ENCODE measurements at regions of chr17 and their contacts with region 1.

Region 1: DNA sequence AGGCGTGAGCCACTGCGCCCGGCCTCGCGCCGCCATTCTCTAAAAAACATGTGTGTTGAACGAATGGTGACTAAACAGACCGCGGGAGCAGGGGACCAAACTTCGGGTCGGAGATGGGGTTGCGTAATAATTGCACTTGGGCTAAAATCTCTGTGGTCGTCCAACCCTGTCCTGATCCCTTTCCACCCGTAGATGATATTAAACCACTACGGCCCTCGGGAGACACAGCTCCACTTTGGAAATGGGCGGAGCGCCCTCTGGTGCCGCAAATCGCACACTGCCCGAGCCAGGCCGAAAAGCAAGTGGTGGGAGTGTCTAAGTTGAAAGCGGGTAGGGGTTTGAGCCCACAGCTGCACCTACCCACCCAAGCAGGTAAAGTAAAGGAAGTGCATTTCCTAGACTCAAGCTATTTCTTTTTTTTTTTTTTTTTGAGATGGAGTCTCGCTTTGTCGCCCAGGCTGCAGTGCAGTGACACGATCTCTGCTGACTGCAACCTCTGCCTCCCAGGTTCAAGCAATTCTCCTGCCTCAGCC is 17.0 kb downstream of the CAVIN1 start:
- DNase-seq: peak; percentile 72 to 86 (median 80)
- ATAC-seq: peak; percentile 91
- H3K4me3 ChIP-seq: no peak overlapping the region
- H3K4me3 Mint-ChIP-seq: peak overlapping the region in 4 of 10 donors; percentile 9 to 41 (median 29)
- H3K27ac ChIP-seq: no peak overlapping the region
- H3K27ac Mint-ChIP-seq: peak overlapping the region in 6 of 9 donors; percentile 51 to 71 (median 62)
- H3K4me1 ChIP-seq: peaks cover 4 to 8% of the 10 kb centered on the region in 2 donors
- H3K4me1 Mint-ChIP-seq: peaks cover 6 to 28% (median 17%) of the 10 kb centered on the region in 7 donors
- H3K27me3 ChIP-seq: no peaks in the 10 kb centered on the region
- H3K27me3 Mint-ChIP-seq: peaks cover 0 to 3% (median 0%) of the 10 kb centered on the region in 5 donors

Region 2: DNA sequence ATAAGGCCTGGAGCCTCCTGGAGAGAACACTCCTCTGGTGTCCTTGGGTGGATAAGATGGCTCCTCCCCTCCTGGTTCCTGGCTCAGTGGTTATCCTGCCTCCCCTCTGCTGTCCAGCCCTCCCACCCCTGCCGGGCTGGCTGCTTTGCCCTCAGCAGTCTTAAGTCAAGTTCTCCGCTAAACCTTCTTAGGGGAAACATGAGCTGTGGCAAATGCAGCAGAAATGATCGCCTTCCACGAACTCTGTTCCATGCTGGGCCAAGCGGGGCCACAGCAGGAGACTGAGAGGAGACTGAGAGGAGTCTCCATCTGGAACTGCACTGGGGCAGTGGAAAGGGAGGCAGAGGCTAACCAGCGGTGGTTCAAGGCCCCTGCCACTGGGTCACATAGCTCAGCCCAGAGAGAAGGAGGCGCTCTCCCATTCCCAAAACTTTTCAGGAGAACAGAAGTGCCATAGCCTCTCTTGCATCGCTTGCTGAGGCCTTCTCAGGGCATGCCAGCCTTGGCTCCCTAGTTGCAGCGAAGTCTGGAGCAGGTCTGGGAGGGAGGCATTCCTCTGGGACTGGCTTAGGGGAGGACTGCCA is 1931.5 kb before region 1 on chr17:
- CTCF ChIA-PET with region 1: no interaction called
- POLR2A ChIA-PET with region 1: no interaction called
- intact Hi-C with region 1: no loop called
- DNase-seq: no peak
- ATAC-seq: no peak
- H3K4me3 ChIP-seq: no peak overlapping the region
- H3K4me3 Mint-ChIP-seq: no peak overlapping the region
- H3K27ac ChIP-seq: no peak overlapping the region
- H3K27ac Mint-ChIP-seq: peak overlapping the region in 2 of 9 donors; percentile 26 to 53
- H3K4me1 ChIP-seq: peaks cover 3 to 24% of the 10 kb centered on the region in 2 donors
- H3K4me1 Mint-ChIP-seq: peaks cover 5 to 50% (median 13%) of the 10 kb centered on the region in 7 donors
- H3K27me3 ChIP-seq: no peaks in the 10 kb centered on the region
- H3K27me3 Mint-ChIP-seq: peaks cover 0 to 4% (median 0%) of the 10 kb centered on the region in 5 donors

Region 3: DNA sequence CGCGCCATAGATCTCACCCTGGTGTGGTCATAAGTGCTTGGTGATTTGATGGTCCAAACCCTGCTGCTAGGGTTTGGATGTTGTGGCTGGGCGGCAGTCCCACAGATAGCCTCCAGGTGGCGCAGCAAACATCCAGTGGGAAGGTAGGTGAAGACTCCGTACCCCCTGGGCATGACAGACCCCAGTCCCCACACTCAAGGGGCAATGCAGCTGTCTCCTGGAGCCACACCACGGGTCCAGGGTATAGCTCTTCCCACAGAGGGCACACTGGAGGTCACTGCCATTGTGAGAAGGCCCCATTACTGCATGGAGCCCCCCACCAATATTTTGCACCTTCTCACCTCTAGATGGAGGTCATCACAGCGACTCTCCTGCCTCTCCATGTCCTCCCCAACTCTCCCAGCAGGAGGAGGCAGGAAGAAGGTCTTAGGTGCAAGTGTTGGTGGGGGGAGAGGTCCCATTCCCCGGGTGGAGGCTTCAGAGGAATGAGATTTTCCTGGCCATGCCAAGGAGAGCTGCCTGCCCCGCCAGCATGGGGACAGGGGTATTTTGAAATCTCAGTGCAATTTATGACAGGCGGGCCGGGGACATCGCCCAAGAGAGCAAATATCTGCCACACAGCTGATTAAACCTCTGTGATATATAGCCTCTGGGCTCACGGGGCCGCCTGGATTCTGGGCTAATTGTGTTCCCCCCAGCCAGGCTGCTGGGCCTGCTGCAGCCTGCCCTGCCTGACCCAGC is 338.5 kb before region 1 on chr17:
- CTCF ChIA-PET with region 1: no interaction called
- POLR2A ChIA-PET with region 1: no interaction called
- intact Hi-C with region 1: loop called in 1 of 2 experiments (anchors 5 kb)
- DNase-seq: peak; percentile 31 to 72 (median 58)
- ATAC-seq: peak; percentile 63
- H3K4me3 ChIP-seq: no peak overlapping the region
- H3K4me3 Mint-ChIP-seq: no peak overlapping the region
- H3K27ac ChIP-seq: no peak overlapping the region
- H3K27ac Mint-ChIP-seq: peak overlapping the region in 1 of 9 donors; percentile 36
- H3K4me1 ChIP-seq: peaks cover 7 to 30% of the 10 kb centered on the region in 2 donors
- H3K4me1 Mint-ChIP-seq: peaks cover 9 to 30% (median 23%) of the 10 kb centered on the region in 7 donors
- H3K27me3 ChIP-seq: peaks cover 0 to 2% of the 10 kb centered on the region in 2 donors
- H3K27me3 Mint-ChIP-seq: peaks cover 4 to 21% (median 11%) of the 10 kb centered on the region in 5 donors

Region 4: DNA sequence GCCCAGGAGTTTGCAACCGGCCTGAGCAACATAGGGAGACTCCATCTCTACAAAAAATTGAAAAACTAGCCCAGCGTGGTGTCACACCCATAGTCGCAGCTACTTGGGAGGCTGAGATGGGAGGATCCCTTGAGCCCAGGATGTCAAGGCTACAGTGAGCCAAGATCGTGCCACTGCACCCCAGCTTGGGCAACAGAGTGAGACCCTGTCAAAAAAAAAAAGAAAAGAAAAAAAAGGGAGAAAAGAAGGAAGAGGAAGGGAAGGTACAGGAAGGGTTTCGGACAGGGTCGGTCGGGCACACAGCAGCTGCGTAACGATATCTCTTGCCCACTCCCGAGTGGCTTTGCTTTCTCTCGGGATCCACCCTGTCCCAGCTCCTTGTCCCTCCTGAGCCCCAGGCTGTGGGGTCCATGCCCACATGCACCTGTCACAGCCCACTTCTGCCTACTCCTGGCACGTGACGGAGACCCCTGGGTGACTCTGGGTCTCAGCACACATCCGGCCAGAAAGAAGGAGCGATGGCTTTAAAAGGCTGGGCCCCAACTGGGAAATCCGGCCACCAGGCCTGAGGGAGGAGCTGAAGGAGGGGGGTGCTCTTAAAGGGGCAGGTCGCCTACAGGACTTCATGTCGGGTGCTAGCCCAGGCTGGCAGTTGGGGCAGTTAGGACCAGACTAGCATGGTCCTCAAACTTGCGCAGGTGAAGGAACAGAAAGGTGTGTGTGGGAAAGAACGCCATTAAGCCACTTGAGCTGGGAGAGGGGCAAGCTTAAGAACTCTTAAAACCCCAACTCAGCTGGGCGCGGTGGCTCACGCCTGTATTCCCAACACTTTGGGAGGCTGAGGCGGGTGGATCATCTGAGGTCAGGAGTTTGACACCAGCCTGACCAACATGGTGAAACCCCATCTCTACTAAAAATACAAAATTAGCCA is 211.8 kb before region 1 on chr17 and contains the start of gene GHDC:
- CTCF ChIA-PET with region 1: interaction called, 3 read pairs
- POLR2A ChIA-PET with region 1: no interaction called
- intact Hi-C with region 1: loop called in 1 of 2 experiments (anchors 10 kb)
- DNase-seq: peak; percentile 48 to 83 (median 75)
- ATAC-seq: peak; percentile 94
- H3K4me3 ChIP-seq: peak within 1 kb of the TSS; percentile 98
- H3K4me3 Mint-ChIP-seq: peak within 1 kb of the TSS; percentile 93 to 99 (median 95)
- H3K27ac ChIP-seq: peak within 1 kb of the TSS; percentile 82
- H3K27ac Mint-ChIP-seq: peak within 1 kb of the TSS; percentile 86 to 94 (median 90)
- H3K4me1 ChIP-seq: peaks cover 4 to 19% of the 10 kb centered on the region in 2 donors
- H3K4me1 Mint-ChIP-seq: peaks cover 13 to 33% (median 23%) of the 10 kb centered on the region in 7 donors
- H3K27me3 ChIP-seq: no peaks in the 10 kb centered on the region
- H3K27me3 Mint-ChIP-seq: no peaks in the 10 kb centered on the region
- total RNA-seq, gene GHDC: 15.5 to 29.8 (median 19.9) TPM

Region 5: DNA sequence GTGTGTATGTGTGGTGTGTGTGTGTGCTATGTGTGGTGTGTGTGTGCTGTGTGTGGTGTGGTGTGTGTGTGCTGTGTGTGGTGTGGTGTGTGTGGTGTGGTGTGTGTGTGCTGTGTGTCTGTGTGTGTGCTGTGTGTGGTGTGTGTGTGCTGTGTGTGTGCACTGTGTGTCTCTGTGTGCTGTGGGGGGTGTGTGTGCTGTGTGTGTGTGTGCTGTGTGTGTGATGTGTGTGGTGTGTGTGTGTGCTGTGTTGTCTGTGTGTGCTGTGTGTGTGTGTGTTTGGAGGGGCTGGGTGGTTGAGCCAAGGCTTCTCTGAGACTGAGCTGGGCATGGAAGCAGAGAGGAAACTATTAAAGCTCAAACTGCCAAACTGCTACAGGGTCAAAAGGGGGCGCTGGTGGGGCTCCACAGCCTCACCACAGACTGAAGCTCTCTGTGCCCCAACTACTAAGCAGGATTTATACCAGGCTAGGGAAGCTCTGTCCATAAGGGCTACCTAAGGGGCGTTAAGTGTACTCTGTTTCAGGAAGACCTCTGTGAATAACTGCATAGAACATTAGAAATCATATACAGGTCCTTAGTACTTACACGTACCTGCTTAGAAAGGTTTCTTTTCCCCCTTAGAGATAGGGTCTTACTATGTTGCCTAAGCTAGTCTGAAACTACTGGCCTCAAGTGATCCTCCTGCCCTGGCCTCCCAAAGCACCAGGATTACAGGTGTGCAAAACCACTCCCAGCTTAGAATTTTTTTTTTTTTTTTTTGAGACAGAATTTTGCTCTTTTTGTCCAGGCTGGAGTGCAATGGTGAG is 183.9 kb before region 1 on chr17:
- CTCF ChIA-PET with region 1: interaction called, 10 read pairs
- POLR2A ChIA-PET with region 1: no interaction called
- intact Hi-C with region 1: loop called (anchors 1 to 2 kb)
- DNase-seq: peak; percentile 39 to 80 (median 71)
- ATAC-seq: peak; percentile 95
- H3K4me3 ChIP-seq: no peak overlapping the region
- H3K4me3 Mint-ChIP-seq: no peak overlapping the region
- H3K27ac ChIP-seq: no peak overlapping the region
- H3K27ac Mint-ChIP-seq: peak overlapping the region in 8 of 9 donors; percentile 53 to 88 (median 70)
- H3K4me1 ChIP-seq: peaks cover 0 to 5% of the 10 kb centered on the region in 2 donors
- H3K4me1 Mint-ChIP-seq: peaks cover 0 to 9% (median 6%) of the 10 kb centered on the region in 7 donors
- H3K27me3 ChIP-seq: no peaks in the 10 kb centered on the region
- H3K27me3 Mint-ChIP-seq: no peaks in the 10 kb centered on the region

Region 6: DNA sequence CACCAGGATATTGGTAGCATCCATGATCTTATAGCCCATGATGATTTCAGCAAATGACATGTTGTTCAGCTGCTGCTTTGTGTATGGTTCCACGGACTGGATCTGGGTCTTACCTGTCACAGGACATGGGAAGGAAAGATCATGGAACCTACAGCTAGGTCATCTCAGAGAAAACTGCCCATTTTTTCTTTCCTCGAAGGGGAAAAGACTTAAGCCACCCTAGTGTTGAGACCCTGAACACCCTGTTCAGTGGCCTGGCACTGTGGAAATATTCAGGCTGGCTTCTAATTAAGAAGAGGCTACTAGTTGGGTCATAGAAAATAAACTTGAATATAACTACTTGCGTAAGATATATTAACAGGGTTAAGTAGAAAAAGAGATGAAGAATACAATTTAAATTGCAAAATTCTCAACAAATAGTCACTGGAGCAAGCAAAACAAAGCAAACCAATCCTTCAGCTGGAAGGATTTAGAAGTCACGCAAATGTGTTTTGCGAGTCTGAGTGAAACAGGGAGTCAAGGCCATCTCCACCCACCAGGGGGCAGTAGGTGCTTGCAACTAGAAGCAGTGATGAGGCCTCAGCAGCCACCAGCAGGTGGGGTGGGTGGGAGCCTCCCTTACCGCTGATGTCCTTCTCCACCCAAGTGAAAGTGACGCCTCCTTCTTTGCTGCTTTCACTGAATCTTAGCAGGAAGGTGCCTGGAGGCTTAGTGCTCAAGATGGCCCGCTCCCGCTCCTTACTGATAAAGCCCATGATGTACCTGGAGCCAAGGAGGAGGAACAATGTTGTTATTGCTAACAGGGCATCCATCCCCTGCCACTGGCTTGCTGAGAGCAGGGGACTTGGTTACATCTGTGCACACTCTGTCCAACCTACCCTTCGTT is 83.4 kb before region 1 on chr17:
- CTCF ChIA-PET with region 1: interaction called, 264 read pairs
- POLR2A ChIA-PET with region 1: interaction called, 10 read pairs
- intact Hi-C with region 1: loop called (anchors 1 kb)
- DNase-seq: peak; percentile 80 to 95 (median 93)
- ATAC-seq: peak; percentile 100
- H3K4me3 ChIP-seq: no peak overlapping the region
- H3K4me3 Mint-ChIP-seq: peak overlapping the region in 3 of 10 donors; percentile 19 to 45 (median 27)
- H3K27ac ChIP-seq: peak overlapping the region; percentile 40
- H3K27ac Mint-ChIP-seq: peak overlapping the region; percentile 42 to 91 (median 80)
- H3K4me1 ChIP-seq: peaks cover 3 to 23% of the 10 kb centered on the region in 2 donors
- H3K4me1 Mint-ChIP-seq: peaks cover 19 to 55% (median 43%) of the 10 kb centered on the region in 7 donors
- H3K27me3 ChIP-seq: no peaks in the 10 kb centered on the region
- H3K27me3 Mint-ChIP-seq: no peaks in the 10 kb centered on the region

Region 7: GRCh38 chr17:42337442-42337841 is 68.6 kb before region 1 on chr17:
- CTCF ChIA-PET with region 1: interaction called, 3 read pairs
- POLR2A ChIA-PET with region 1: interaction called, 4 read pairs
- intact Hi-C with region 1: loop called in 1 of 2 experiments (anchors 5 kb)
- DNase-seq: peak; percentile 23 to 87 (median 80)
- ATAC-seq: peak; percentile 92
- H3K4me3 ChIP-seq: no peak overlapping the region
- H3K4me3 Mint-ChIP-seq: peak overlapping the region; percentile 52 to 84 (median 72)
- H3K27ac ChIP-seq: peak overlapping the region; percentile 77
- H3K27ac Mint-ChIP-seq: peak overlapping the region; percentile 85 to 98 (median 93)
- H3K4me1 ChIP-seq: peaks cover 11 to 29% of the 10 kb centered on the region in 2 donors
- H3K4me1 Mint-ChIP-seq: peaks cover 18 to 73% (median 38%) of the 10 kb centered on the region in 7 donors
- H3K27me3 ChIP-seq: no peaks in the 10 kb centered on the region
- H3K27me3 Mint-ChIP-seq: no peaks in the 10 kb centered on the region

Region 8: GRCh38 chr17:42517516-42517915 is 111.5 kb after region 1 on chr17:
- CTCF ChIA-PET with region 1: interaction called, 4 read pairs
- POLR2A ChIA-PET with region 1: no interaction called
- intact Hi-C with region 1: loop called in 1 of 2 experiments (anchors 1 kb)
- DNase-seq: peak; percentile 67 to 83 (median 75)
- ATAC-seq: peak; percentile 87
- H3K4me3 ChIP-seq: no peak overlapping the region
- H3K4me3 Mint-ChIP-seq: no peak overlapping the region
- H3K27ac ChIP-seq: no peak overlapping the region
- H3K27ac Mint-ChIP-seq: peak overlapping the region in 1 of 9 donors; percentile 12
- H3K4me1 ChIP-seq: no peaks in the 10 kb centered on the region
- H3K4me1 Mint-ChIP-seq: peaks cover 5 to 8% (median 5%) of the 10 kb centered on the region in 7 donors
- H3K27me3 ChIP-seq: no peaks in the 10 kb centered on the region
- H3K27me3 Mint-ChIP-seq: peaks cover 0 to 4% (median 0%) of the 10 kb centered on the region in 5 donors

Region 9: GRCh38 chr17:43814714-43815113 is 1408.7 kb after region 1 on chr17:
- CTCF ChIA-PET with region 1: no interaction called
- POLR2A ChIA-PET with region 1: no interaction called
- intact Hi-C with region 1: no loop called
- DNase-seq: no peak
- ATAC-seq: no peak
- H3K4me3 ChIP-seq: no peak overlapping the region
- H3K4me3 Mint-ChIP-seq: no peak overlapping the region
- H3K27ac ChIP-seq: no peak overlapping the region
- H3K27ac Mint-ChIP-seq: peak overlapping the region in 1 of 9 donors; percentile 4
- H3K4me1 ChIP-seq: no peaks in the 10 kb centered on the region
- H3K4me1 Mint-ChIP-seq: peaks cover 0 to 3% (median 0%) of the 10 kb centered on the region in 7 donors
- H3K27me3 ChIP-seq: no peaks in the 10 kb centered on the region
- H3K27me3 Mint-ChIP-seq: peaks cover 0 to 12% (median 0%) of the 10 kb centered on the region in 5 donors

Measured in naive thymus-derived CD4-positive, alpha-beta T cell (primary cell).